ENCODE measurements at regions of chr9 and their contacts with region 1.

Region 1: DNA sequence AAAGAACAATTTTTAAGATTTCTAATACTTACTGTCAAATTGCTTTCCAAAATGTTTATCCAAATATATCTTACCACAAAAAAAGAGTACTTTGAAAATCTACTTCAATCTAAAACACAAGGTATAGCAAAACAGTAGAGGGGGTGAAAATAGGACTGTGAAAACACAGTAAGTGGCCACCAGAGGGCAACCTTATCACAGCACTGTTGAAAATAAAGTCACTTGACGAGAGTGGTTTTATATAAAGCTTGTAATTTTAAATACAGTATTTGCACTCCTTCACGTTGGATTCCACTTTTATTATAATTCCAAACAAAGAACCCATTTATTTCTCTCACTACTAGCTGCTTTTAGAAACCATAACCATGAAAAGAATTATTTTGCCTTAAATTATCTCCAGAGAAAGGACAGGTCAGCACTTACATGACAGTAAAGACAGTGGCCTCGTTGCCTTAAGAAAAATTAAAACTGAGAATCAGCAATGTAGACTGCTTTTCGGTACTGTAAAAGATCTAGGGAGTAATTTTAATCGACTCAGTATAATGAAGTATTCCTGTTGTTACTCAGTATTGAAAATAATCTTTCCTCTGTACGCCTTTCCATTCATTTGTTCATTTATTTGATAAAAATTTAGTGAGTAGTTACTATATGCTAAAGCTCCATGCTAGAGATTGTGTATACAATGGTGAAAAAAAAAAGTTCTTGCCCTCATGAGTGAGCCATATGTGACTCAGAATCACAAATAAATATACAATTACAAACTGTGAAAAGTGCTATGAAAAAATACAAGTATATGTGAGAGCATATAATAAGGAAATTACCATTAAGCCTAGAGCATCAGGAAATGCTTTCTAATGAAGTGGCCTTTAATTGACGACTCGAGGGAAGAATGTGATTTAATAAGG is 40.0 kb upstream of the CDK5RAP2 start:
- DNase-seq: peak; percentile 47
- ATAC-seq: peak; percentile 94
- H3K4me3 ChIP-seq: no peak overlapping the region
- H3K27ac ChIP-seq: no peak overlapping the region
- H3K4me1 ChIP-seq: peaks cover under 1 to 6% of the 10 kb centered on the region in 2 experiments; a peak in 3 of 4 replicates
- H3K27me3 ChIP-seq: no peaks in the 10 kb centered on the region
- CTCF ChIP-seq: peak; percentile 67 to 92 (median 78)
- POLR2A ChIP-seq: no peak
- RAD21 ChIP-seq: peak; percentile 78

Region 2: GRCh38 chr9:120635011-120635410 is 15.0 kb after region 1 on chr9:
- CTCF ChIA-PET with region 1: interaction called, 10 read pairs
- POLR2A ChIA-PET with region 1: no interaction called
- RAD21 ChIA-PET with region 1: no interaction called
- intact Hi-C with region 1: no loop called
- DNase-seq: no peak
- ATAC-seq: no peak
- H3K4me3 ChIP-seq: no peak overlapping the region
- H3K27ac ChIP-seq: no peak overlapping the region
- H3K4me1 ChIP-seq: no peaks in the 10 kb centered on the region
- H3K27me3 ChIP-seq: no peaks in the 10 kb centered on the region
- CTCF ChIP-seq: no peak
- POLR2A ChIP-seq: no peak
- RAD21 ChIP-seq: no peak

Region 3: DNA sequence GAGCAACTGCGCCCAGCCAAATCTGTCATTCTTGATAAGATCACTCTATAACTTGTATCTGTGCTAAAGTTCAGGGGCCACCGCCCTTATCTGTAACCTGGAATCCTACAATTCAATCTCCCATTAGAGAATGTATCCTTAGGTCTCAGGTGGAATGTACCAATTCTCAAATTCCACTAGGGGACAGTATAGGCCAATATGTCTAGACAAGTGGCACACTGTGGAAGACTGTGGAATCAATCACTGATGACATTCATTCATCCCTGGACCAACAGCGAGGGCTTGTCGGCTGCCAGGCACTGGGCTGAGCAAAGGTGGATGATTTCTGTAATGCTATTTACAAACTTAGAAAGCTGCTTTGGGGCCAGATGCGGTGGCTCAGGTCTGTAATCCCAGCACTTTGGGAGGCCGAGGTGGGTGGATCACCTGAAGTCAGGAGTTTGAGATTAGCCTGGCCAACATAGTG is 123.0 kb after region 1 on chr9:
- CTCF ChIA-PET with region 1: no interaction called
- POLR2A ChIA-PET with region 1: no interaction called
- RAD21 ChIA-PET with region 1: no interaction called
- intact Hi-C with region 1: loop called (anchors 5 kb)
- DNase-seq: peak; percentile 29
- ATAC-seq: peak; percentile 98
- H3K4me3 ChIP-seq: no peak overlapping the region
- H3K27ac ChIP-seq: no peak overlapping the region
- H3K4me1 ChIP-seq: no peaks in the 10 kb centered on the region
- H3K27me3 ChIP-seq: no peaks in the 10 kb centered on the region
- CTCF ChIP-seq: peak; percentile 57 to 79 (median 78); a peak in 5 of 6 replicates
- POLR2A ChIP-seq: no peak
- RAD21 ChIP-seq: peak; percentile 81

Region 4: GRCh38 chr9:121009650-121010049 is 389.6 kb after region 1 on chr9:
- CTCF ChIA-PET with region 1: no interaction called
- POLR2A ChIA-PET with region 1: no interaction called
- RAD21 ChIA-PET with region 1: no interaction called
- intact Hi-C with region 1: no loop called
- DNase-seq: no peak
- ATAC-seq: no peak
- H3K4me3 ChIP-seq: no peak overlapping the region
- H3K27ac ChIP-seq: no peak overlapping the region
- H3K4me1 ChIP-seq: no peaks in the 10 kb centered on the region
- H3K27me3 ChIP-seq: no peaks in the 10 kb centered on the region
- CTCF ChIP-seq: no peak
- POLR2A ChIP-seq: no peak
- RAD21 ChIP-seq: no peak

Measured in HCT116 (cell line).